Activated CD8-positive, alpha-beta T cell treated with anti-CD3 and anti-CD28 coated beads for 36 hours (primary cell): ENCODE measurements at regions of chr6 and their contacts with region 1.

Region 1: GRCh38 chr6:34414999-34415858 is 10.6 kb downstream of the RPS10 start:
- DNase-seq: peak; percentile 53
- ATAC-seq: peak; percentile 61
- H3K4me3 Mint-ChIP-seq: no peak overlapping the region
- H3K27ac Mint-ChIP-seq: peak overlapping the region; percentile 30
- H3K4me1 Mint-ChIP-seq: peaks cover 14% of the 10 kb centered on the region
- H3K27me3 Mint-ChIP-seq: no peaks in the 10 kb centered on the region
- CTCF ChIP-seq: peak; percentile 11

Region 2: GRCh38 chr6:34161857-34162515 is 253.2 kb before region 1 on chr6:
- CTCF ChIA-PET with region 1: interaction called, 14 read pairs
- POLR2A ChIA-PET with region 1: no interaction called
- intact Hi-C with region 1: loop called (anchors 10 kb)
- DNase-seq: no peak
- ATAC-seq: no peak
- H3K4me3 Mint-ChIP-seq: no peak overlapping the region
- H3K27ac Mint-ChIP-seq: no peak overlapping the region
- H3K4me1 Mint-ChIP-seq: no peaks in the 10 kb centered on the region
- H3K27me3 Mint-ChIP-seq: no peaks in the 10 kb centered on the region
- CTCF ChIP-seq: no peak

Region 3: DNA sequence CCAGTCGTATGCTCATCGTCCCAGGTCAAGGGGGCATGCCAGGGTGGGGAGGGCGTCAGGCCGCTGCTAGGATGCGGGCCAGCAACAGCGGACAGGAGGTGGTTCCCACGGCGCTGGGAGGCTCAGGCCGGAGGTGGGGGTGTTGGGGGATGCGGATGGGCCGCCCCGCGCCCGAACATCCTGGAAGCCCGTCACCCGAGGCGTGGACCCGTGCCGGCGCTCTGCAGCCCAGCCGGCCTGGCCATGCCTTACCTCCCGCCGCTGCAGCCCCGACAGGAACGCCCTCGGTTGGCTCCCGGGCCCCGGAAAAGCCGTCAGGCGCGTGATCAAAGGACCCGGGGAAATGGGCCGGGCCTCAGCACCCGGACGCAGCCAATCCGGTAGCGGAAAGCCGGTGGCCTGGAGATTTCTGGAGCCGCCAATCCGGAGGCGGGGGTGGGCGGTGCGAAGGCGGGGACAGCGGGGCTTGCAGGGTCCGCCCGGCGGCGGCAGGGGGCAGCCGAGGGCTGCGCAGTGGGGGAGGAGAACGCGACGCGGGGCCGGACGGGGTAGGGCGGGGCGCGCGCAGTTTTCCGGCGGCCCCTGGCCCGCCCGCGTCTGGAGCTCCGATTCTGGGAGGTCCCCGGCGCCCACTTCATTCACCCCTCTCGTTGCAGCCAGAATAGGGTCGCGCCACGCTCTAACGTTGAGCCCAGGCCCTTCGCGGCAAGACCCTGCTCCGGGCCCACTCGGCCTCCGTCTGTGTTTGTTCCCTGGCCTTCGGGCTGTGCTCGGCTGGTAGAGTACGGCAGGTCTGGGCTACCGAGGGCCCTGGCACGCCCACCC is 166.3 kb before region 1 on chr6 and contains the start of gene SMIM29:
- CTCF ChIA-PET with region 1: interaction called, 61 read pairs
- POLR2A ChIA-PET with region 1: interaction called, 12 read pairs
- intact Hi-C with region 1: no loop called
- DNase-seq: peak; percentile 97
- ATAC-seq: peak; percentile 88
- H3K4me3 Mint-ChIP-seq: peak within 1 kb of the TSS; percentile 85
- H3K27ac Mint-ChIP-seq: peak within 1 kb of the TSS; percentile 89
- H3K4me1 Mint-ChIP-seq: peaks cover 37% of the 10 kb centered on the region
- H3K27me3 Mint-ChIP-seq: no peaks in the 10 kb centered on the region
- CTCF ChIP-seq: peak; percentile 88
- total RNA-seq, gene SMIM29: 13.3 to 16.4 TPM

Region 4: DNA sequence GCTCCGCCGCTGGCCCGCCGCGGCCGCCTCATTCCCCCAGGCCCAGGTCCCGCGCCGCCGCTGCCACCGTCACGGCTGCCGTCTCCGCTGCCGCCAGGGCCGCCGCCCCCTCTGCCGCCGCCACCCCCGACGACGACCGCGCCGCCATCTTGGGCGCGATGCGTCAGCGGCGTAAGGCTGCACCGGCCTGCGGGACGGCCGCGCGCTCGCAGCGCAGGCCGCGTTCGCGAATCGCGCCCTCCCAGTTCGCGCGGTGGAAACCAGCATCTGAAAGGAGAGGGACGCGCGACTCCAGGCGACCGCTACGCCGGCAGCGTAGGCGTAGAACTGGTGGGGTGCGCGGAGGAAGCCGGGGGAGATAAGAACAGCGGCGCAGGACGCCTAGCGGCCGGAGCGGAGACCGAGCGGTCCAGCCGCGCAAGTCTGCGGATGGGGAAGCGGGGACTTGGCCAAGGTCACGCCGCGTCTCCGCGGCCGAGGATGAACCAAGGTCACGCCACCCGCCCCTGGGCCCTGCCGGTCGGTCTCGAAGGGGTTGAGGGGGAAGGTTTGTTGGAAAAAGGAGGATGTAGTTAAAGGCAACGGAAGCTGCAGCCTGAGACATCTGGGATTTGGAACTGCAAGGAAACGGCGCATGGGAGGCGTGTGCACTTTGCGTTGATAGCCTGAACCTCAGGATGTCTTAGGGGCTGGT is 22.6 kb before region 1 on chr6 and contains the start of gene NUDT3:
- CTCF ChIA-PET with region 1: interaction called, 14 read pairs
- POLR2A ChIA-PET with region 1: interaction called, 18 read pairs
- intact Hi-C with region 1: no loop called
- DNase-seq: peak; percentile 96
- ATAC-seq: peak; percentile 94
- H3K4me3 Mint-ChIP-seq: no peak within 1 kb of the TSS
- H3K27ac Mint-ChIP-seq: peak within 1 kb of the TSS; percentile 93
- H3K4me1 Mint-ChIP-seq: peaks cover 20% of the 10 kb centered on the region
- H3K27me3 Mint-ChIP-seq: no peaks in the 10 kb centered on the region
- CTCF ChIP-seq: peak; percentile 76
- total RNA-seq, gene NUDT3: 15.0 to 15.2 TPM

Region 5: GRCh38 chr6:34425498-34426410 is 10.5 kb after region 1 on chr6 and contains the start of gene RPS10:
- CTCF ChIA-PET with region 1: interaction called, 7 read pairs
- POLR2A ChIA-PET with region 1: interaction called, 63 read pairs
- intact Hi-C with region 1: no loop called
- DNase-seq: peak; percentile 92
- ATAC-seq: peak; percentile 98
- H3K4me3 Mint-ChIP-seq: peak within 1 kb of the TSS; percentile 98
- H3K27ac Mint-ChIP-seq: peak within 1 kb of the TSS; percentile 100
- H3K4me1 Mint-ChIP-seq: peaks cover 33% of the 10 kb centered on the region
- H3K27me3 Mint-ChIP-seq: peaks cover 2% of the 10 kb centered on the region
- CTCF ChIP-seq: no peak
- total RNA-seq, gene RPS10: 2,208 to 2,269 TPM